Spleen (tissue), 13 donors: ENCODE measurements at regions of chr7 and their contacts with region 1.

Region 1: DNA sequence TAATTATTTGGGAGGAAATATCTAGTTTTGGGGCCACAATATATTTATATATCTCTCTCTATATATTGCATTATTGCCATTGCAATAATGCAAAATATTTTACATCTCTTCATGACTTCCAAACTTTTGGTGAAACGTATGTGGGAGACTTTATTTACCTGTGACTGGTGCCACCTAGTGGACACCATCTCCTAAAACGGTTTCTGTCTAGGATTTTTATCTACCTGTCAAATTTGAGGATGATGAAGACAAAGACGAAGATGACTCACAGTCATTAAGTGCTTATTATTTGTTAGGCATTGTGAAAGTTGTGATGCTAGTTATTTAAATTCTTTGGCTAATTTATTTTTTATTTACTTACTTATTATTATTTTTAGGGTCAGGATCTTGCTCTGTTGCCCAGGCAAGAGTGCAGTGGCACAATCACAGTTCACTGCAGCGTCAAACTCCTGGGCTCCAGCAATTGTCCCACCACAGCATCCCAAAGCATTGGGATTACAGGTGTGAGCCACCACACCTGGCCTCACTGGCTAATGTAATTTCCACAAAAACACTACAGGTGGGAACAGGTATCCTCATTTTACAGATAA is 18.7 kb upstream of the CBLL1 start:
- DNase-seq: no peak
- H3K4me3 ChIP-seq: no peak overlapping the region
- H3K27ac ChIP-seq: no peak overlapping the region
- H3K4me1 ChIP-seq: no peaks in the 10 kb centered on the region
- H3K27me3 ChIP-seq: peaks cover 0 to 8% (median 0%) of the 10 kb centered on the region in 7 donors
- CTCF ChIP-seq: peak in 10 of 11 experiments; percentile 34 to 76 (median 71)
- POLR2A ChIP-seq: no peak

Region 2: GRCh38 chr7:107462740-107463444 is 262.4 kb before region 1 on chr7:
- intact Hi-C with region 1: loop called (anchors 5 kb)
- DNase-seq: peak; percentile 77
- H3K4me3 ChIP-seq: no peak overlapping the region
- H3K27ac ChIP-seq: no peak overlapping the region
- H3K4me1 ChIP-seq: no peaks in the 10 kb centered on the region
- H3K27me3 ChIP-seq: no peaks in the 10 kb centered on the region
- CTCF ChIP-seq: peak; percentile 30 to 81 (median 67)
- POLR2A ChIP-seq: no peak

Region 3: GRCh38 chr7:107579885-107580715 is 145.1 kb before region 1 on chr7 and contains the start of gene BCAP29:
- intact Hi-C with region 1: loop called (anchors 10 kb)
- DNase-seq: peak; percentile 93
- H3K4me3 ChIP-seq: peak within 1 kb of the TSS; percentile 61 to 87 (median 66)
- H3K27ac ChIP-seq: peak within 1 kb of the TSS; percentile 81 to 95 (median 91)
- H3K4me1 ChIP-seq: peaks cover 15 to 44% (median 34%) of the 10 kb centered on the region in 6 donors
- H3K27me3 ChIP-seq: no peaks in the 10 kb centered on the region
- CTCF ChIP-seq: peak in 6 of 11 experiments; percentile 20 to 48 (median 32)
- POLR2A ChIP-seq: peak in 1 of 3 donors; percentile 55
- total RNA-seq, gene BCAP29: 34.2 to 139 (median 55.0) TPM